AG04449 (cell line): ENCODE measurements at regions of chr20 and their contacts with region 1.

Region 1: DNA sequence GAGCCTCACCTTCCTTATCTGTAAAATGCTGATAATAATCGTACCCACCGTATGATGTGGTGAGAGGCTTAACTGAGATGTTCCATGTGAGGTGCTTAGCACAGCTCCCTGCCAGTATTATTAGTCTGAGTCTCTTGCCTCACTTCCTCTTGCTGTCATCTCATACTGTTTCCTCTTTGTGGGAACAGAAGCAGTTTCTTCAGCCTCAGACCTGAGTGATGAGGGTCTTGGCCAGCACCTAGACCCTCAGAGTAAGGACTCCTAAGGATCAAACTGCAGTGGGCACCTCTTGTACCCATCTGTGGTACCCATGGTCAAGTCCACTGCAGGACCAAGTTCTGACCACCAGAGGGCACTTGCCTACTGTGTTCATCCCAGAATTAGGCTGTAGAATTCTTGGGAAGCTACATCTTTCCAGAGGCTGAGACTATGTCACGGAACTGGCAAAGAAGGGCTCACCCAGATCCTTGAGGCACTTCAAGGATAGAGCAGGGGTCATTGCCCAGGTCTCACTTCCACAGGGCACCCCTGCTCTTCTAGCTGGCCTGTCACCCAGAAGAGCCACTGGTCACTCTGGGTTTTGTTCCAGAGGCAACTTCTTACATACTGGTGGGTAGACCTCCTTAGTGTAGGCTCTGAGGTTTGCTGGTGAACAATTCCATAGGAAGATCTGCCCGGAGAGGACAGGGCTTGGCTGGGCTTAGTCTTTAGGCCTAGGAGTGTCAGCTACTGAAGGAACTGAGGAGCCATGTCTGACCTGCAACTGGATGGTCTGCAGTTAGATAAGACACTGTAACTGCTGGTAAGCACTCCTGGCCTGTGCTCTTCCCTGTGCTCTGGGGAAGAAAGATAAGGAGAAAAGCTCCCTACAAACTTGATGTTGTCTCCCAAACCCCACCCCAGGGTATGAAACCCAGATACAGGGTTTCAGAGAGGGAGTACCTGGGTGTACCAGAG is 20.6 kb upstream of the SGK2 start:
- DNase-seq: no peak
- H3K4me3 ChIP-seq: no peak overlapping the region
- CTCF ChIP-seq: peak; percentile 88

Region 2: DNA sequence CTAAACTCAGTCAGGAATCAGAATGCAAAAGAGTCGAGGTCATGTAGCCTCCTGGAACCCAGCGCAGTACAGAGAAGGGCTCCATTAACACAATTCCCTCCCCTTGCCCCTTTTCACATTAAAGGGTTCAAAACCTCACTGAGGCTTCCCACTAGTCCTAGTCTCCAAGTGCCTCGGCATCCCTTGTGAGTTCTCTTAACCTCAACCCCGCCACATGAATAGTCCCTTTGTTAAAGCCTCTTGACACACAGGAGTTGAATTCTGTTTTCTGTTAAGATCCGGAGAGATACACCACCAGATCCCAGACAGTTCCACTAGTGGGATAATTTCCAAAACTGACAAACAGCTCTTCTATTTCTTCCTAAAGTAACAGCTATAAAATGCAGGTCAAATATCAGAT is 366.3 kb before region 1 on chr20:
- CTCF ChIA-PET with region 1: no interaction called
- POLR2A ChIA-PET with region 1: no interaction called
- DNase-seq: no peak
- H3K4me3 ChIP-seq: no peak overlapping the region
- CTCF ChIP-seq: no peak

Region 3: DNA sequence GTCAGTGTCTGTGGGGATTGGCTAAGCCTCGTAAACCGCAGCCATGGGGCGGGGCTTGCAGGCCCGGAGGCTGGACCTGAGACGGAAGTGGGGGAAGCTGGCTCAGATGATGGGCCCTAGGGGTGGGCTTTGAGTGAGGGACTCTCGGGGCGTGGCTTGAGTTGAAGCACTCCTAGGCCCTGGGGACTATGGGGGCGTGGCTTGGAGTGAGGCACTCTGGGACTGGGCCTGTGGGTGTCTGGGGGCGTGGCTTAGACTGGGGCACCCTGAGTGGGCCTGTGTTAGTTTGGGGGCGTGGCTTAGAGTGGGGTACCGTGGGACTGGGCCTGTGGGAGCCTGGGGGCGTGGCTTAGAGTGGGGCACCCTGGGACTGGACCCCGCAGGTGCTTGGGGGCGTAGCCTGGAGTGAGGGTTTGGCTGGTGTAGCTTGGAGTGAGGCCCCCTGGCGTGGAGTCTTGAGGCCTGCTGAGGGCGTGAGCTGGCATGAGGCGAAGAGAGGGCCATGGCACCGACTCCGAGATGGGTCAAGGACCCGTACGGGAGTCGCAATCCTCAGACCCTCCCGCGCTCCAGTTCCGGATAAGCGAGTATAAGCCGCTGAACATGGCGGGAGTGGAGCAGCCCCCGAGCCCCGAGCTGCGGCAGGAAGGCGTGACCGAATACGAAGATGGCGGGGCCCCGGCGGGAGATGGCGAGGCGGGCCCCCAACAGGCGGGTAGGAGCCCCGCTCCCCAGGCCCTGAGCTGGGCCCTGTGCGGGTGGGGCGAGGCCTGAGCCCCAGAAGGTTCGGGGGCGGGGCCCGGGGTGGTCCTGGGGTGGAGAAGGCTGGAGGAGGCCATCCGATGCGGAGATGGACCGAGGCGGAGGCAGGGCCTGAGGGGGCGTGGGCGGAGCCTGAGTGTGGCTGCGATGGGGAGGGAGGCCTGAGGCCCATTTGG is 23.9 kb before region 1 on chr20:
- CTCF ChIA-PET with region 1: interaction called, 14 read pairs
- POLR2A ChIA-PET with region 1: no interaction called
- DNase-seq: peak; percentile 90
- H3K4me3 ChIP-seq: peak overlapping the region; percentile 67
- CTCF ChIP-seq: peak; percentile 54

Region 4: GRCh38 chr20:43558412-43559146 is 20.4 kb after region 1 on chr20 and contains the start of gene SGK2:
- CTCF ChIA-PET with region 1: interaction called, 15 read pairs
- POLR2A ChIA-PET with region 1: no interaction called
- DNase-seq: no peak
- H3K4me3 ChIP-seq: no peak within 1 kb of the TSS
- CTCF ChIP-seq: no peak

Region 5: DNA sequence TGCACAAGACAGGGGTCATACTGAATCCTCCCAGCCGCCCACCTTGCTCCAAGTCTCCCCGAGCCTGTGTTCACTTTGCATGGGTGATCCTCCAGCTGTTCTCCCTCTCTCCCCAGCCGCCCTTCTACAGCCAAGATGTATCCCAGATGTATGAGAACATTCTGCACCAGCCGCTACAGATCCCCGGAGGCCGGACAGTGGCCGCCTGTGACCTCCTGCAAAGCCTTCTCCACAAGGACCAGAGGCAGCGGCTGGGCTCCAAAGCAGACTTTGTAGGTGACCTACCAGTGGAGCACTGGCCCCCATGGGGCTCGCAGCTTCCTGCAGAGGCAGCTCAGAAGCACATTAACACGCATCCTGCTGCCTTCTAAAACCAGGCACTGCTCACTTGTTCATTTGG is 37.9 kb after region 1 on chr20:
- CTCF ChIA-PET with region 1: interaction called, 52 read pairs
- POLR2A ChIA-PET with region 1: no interaction called
- DNase-seq: no peak
- H3K4me3 ChIP-seq: no peak overlapping the region
- CTCF ChIP-seq: no peak

Region 6: GRCh38 chr20:43691928-43692524 is 153.8 kb after region 1 on chr20:
- CTCF ChIA-PET with region 1: interaction called, 112 read pairs
- POLR2A ChIA-PET with region 1: no interaction called
- DNase-seq: no peak
- H3K4me3 ChIP-seq: no peak overlapping the region
- CTCF ChIP-seq: peak; percentile 65

Region 7: GRCh38 chr20:44080646-44081267 is 542.6 kb after region 1 on chr20:
- CTCF ChIA-PET with region 1: interaction called, 51 read pairs
- POLR2A ChIA-PET with region 1: no interaction called
- DNase-seq: no peak
- H3K4me3 ChIP-seq: no peak overlapping the region
- CTCF ChIP-seq: peak; percentile 83